ENCODE measurements at regions of chr17 and their contacts with region 1.

Region 1: DNA sequence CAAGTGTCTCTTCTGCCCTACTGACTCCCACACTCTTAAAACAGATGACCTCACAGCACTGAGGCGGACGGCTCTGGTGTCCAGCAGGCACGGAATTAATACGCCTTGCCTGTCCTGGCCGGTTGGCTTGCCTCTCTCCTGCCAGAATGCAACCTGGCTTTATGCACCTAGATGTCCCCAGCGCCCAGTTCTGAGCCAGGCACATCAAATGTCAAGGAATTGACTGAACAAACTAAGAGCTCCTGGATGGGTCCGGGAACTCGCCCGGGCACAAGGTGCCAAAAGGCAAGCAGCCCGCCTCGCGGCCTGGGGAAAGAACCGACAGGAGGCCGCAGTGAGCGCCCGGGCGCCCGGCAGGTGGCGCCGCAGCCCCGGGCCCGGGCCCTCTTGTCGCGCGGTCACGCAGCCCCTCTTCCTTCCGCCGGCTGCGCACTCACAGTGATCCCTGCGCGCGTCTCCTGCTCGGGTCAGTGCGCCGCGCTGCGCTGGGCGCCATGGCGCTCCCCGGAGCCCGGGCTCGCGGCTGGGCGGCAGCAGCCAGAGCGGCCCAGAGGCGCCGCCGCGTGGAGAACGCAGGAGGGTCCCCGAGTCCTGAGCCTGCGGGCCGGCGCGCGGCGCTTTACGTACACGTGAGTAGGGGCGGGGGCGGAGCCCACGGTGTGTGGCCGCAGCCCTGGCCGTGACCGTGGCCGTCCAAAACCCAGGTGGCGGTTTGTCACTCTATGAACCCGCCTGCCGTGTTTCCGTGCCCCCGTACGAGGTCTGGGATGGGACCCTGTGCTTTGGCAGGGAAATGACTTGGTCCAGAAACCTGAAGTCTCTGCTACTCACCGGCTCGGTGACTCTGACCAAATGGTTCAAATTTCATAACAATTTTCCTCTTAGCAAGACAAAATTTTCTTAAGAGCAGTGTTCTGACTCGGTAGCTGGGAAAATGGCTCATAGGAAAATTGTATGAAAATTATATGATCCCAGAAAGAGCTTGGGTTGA is at the start of gene RSAD1:
- DNase-seq: no peak
- H3K4me3 ChIP-seq: peak within 1 kb of the TSS; percentile 60 to 81
- H3K27ac ChIP-seq: peak within 1 kb of the TSS; percentile 80
- H3K4me1 ChIP-seq: peaks cover 29% of the 10 kb centered on the region
- H3K27me3 ChIP-seq: no peaks in the 10 kb centered on the region
- CTCF ChIP-seq: peak; percentile 60 to 98 (median 83)
- POLR2A ChIP-seq: peak in 1 of 2 donors; percentile 70
- total RNA-seq, gene RSAD1: 37.3 TPM

Region 2: DNA sequence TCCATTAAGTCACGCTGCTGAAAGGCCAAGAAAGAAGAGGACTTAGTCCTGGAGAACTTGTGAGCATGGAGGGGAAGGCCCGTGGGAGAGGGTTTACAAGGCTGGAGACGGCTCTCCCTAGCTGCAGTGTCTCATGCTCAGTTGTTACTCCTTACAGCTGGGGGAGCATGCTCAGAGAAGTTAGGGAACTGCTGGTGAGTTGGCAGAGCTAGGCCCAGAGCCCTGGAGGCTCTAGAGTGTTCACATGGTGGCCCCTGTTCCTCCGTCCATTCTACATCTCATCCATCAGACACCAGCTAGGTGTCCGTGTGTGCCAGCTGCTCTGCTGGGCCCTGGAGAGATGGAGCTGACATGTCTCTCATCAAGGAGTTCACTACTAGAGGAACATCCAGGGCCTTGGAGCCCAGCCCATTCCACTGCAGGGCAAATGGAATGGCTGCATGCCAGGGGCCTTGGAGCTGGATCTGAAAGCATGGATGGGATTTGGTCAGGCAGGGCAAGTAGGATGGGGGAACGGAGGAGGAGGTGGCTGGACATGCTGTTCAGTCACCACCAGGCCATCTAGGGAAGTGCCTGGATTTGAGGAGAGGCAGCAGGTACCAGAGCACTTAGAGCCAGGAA is 126.5 kb before region 1 on chr17:
- intact Hi-C with region 1: loop called (anchors 10 kb)
- DNase-seq: no peak
- H3K4me3 ChIP-seq: no peak overlapping the region
- H3K27ac ChIP-seq: no peak overlapping the region
- H3K4me1 ChIP-seq: peaks cover 29% of the 10 kb centered on the region
- H3K27me3 ChIP-seq: no peaks in the 10 kb centered on the region
- CTCF ChIP-seq: no peak
- POLR2A ChIP-seq: no peak

Region 3: GRCh38 chr17:50452610-50453300 is 25.9 kb before region 1 on chr17:
- intact Hi-C with region 1: no loop called
- DNase-seq: no peak
- H3K4me3 ChIP-seq: no peak overlapping the region
- H3K27ac ChIP-seq: no peak overlapping the region
- H3K4me1 ChIP-seq: peaks cover 38% of the 10 kb centered on the region
- H3K27me3 ChIP-seq: no peaks in the 10 kb centered on the region
- CTCF ChIP-seq: no peak
- POLR2A ChIP-seq: no peak

Region 4: GRCh38 chr17:50541716-50542688 is 63.3 kb after region 1 on chr17:
- intact Hi-C with region 1: loop called (anchors 5 kb)
- DNase-seq: no peak
- H3K4me3 ChIP-seq: peak overlapping the region; percentile 50 to 56
- H3K27ac ChIP-seq: peak overlapping the region; percentile 76
- H3K4me1 ChIP-seq: peaks cover 35% of the 10 kb centered on the region
- H3K27me3 ChIP-seq: no peaks in the 10 kb centered on the region
- CTCF ChIP-seq: peak in 1 of 3 experiments; percentile 13
- POLR2A ChIP-seq: peak in 1 of 2 donors; percentile 25

Region 5: DNA sequence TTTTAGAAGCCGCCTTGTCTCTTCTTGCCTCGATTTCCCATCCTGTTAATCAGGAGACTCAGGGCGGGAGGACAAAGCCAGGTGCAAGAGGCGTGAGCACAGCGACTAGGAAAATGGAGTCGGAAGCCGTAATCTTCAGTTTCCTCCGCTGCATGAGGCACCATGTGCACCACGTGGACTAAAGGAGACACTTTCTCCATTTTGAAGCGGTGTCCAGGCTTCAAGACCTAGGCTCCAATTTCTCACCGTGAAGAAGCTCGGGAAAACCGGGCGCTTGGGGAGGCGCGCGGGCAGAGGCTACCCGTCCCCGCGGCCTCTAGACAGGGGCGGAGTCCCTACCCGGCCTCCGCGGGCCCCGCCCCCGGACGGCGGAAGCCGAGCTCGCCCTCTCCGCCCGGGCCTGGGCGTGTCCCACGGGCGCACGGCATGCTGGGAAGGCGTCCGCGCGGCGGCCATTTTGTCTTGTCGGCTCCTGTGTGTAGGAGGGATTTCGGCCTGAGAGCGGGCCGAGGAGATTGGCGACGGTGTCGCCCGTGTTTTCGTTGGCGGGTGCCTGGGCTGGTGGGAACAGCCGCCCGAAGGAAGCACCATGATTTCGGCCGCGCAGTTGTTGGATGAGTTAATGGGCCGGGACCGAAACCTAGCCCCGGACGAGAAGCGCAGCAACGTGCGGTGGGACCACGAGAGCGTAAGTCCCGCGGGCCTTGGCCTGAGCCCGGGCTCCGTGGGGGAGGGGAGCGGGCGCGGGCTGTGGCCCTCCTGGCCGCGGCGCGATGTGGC is 240.6 kb after region 1 on chr17 and contains the start of gene LUC7L3:
- intact Hi-C with region 1: no loop called
- DNase-seq: peak in 1 of 2 donors; percentile 93
- H3K4me3 ChIP-seq: peak within 1 kb of the TSS; percentile 79 to 89
- H3K27ac ChIP-seq: peak within 1 kb of the TSS; percentile 97
- H3K4me1 ChIP-seq: peaks cover 44% of the 10 kb centered on the region
- H3K27me3 ChIP-seq: no peaks in the 10 kb centered on the region
- CTCF ChIP-seq: no peak
- POLR2A ChIP-seq: peak in 1 of 2 donors; percentile 79
- total RNA-seq, gene LUC7L3: 108 TPM

Measured in vagina (tissue), 2 donors.